ENCODE measurements at regions of chr3 and their contacts with region 1.

Region 1: DNA sequence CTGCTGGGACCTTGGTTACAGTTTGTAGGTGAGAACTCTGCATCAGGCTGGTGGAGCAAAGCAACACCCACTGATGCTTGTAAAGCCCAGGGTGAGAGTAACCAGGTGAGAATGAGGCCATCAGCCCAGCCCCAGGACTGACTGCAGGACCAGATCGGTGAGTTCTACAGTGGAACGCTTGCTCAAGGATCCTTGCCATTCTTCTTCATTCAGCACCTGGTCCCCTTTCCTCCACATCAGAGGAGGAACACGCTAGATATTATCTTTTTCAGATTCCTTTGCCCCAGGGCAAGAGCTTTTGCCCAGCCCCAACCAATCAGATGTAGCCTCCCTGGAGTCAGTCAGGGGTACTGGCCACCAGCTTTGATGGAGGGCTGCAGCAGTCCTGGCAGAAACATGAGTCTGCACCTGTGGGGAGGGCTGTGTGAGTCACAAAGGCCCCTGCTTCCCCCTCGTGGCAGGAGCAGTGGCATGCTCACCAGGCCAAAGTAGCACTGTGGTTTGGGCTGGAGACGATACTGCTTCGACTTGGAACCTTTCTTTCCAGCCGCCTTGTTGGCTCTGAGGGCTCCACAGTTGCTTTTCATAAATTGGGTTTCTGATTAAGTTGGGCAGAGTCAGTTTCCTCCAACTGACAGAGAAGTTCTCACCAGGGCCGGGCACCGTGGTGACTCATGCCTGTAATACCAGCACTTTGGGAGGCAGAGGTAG is 3.5 kb upstream of the SHISA5 start:
- DNase-seq: peak; percentile 46 to 78 (median 69)
- ATAC-seq: peak; percentile 89
- H3K4me3 ChIP-seq: no peak overlapping the region
- H3K4me3 Mint-ChIP-seq: peak overlapping the region in 9 of 10 donors; percentile 30 to 78 (median 47)
- H3K27ac ChIP-seq: no peak overlapping the region
- H3K27ac Mint-ChIP-seq: peak overlapping the region; percentile 6 to 86 (median 76)
- H3K4me1 ChIP-seq: peaks cover 27 to 41% of the 10 kb centered on the region in 2 donors
- H3K4me1 Mint-ChIP-seq: peaks cover 40 to 61% (median 57%) of the 10 kb centered on the region in 7 donors
- H3K27me3 ChIP-seq: no peaks in the 10 kb centered on the region
- H3K27me3 Mint-ChIP-seq: no peaks in the 10 kb centered on the region

Region 2: DNA sequence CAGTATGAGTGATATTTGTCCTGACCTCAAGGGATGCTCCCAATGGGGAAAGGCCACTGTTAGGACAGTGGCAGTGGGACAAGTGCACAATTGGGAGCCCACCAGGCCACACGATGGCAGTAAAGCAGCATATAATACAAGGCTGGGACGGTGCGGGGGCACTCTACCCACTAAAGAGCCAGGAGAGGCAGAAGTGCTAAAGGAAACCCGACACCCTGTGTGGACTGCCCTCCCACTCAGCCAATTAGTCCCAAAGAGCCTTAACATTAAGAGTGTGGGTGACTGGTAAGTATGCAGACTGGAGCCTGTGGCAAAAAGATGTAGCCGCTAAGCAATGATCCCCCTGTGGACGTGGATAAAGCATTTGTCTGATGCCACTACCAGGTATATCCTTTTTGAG is 274.8 kb before region 1 on chr3:
- CTCF ChIA-PET with region 1: interaction called, 4 read pairs
- POLR2A ChIA-PET with region 1: no interaction called
- intact Hi-C with region 1: loop called in 1 of 2 experiments (anchors 2 kb)
- DNase-seq: peak; percentile 21 to 54 (median 44)
- ATAC-seq: peak; percentile 92
- H3K4me3 ChIP-seq: no peak overlapping the region
- H3K4me3 Mint-ChIP-seq: no peak overlapping the region
- H3K27ac ChIP-seq: no peak overlapping the region
- H3K27ac Mint-ChIP-seq: no peak overlapping the region
- H3K4me1 ChIP-seq: no peaks in the 10 kb centered on the region
- H3K4me1 Mint-ChIP-seq: peaks cover 0 to 6% (median 3%) of the 10 kb centered on the region in 7 donors
- H3K27me3 ChIP-seq: no peaks in the 10 kb centered on the region
- H3K27me3 Mint-ChIP-seq: peaks cover 0 to 6% (median 0%) of the 10 kb centered on the region in 5 donors

Region 3: GRCh38 chr3:48273594-48274211 is 233.8 kb before region 1 on chr3:
- CTCF ChIA-PET with region 1: no interaction called
- POLR2A ChIA-PET with region 1: no interaction called
- intact Hi-C with region 1: loop called (anchors 1 to 5 kb)
- DNase-seq: peak in 8 of 9 donors; percentile 37 to 66 (median 55)
- ATAC-seq: peak; percentile 60
- H3K4me3 ChIP-seq: no peak overlapping the region
- H3K4me3 Mint-ChIP-seq: no peak overlapping the region
- H3K27ac ChIP-seq: no peak overlapping the region
- H3K27ac Mint-ChIP-seq: peak overlapping the region in 4 of 9 donors; percentile 8 to 74 (median 51)
- H3K4me1 ChIP-seq: peaks cover 4 to 14% of the 10 kb centered on the region in 2 donors
- H3K4me1 Mint-ChIP-seq: peaks cover 6 to 29% (median 21%) of the 10 kb centered on the region in 7 donors
- H3K27me3 ChIP-seq: no peaks in the 10 kb centered on the region
- H3K27me3 Mint-ChIP-seq: no peaks in the 10 kb centered on the region

Region 4: GRCh38 chr3:48446425-48447193 is 60.9 kb before region 1 on chr3 and contains the start of gene ATRIP:
- CTCF ChIA-PET with region 1: interaction called, 8 read pairs
- POLR2A ChIA-PET with region 1: interaction called, 14 read pairs
- intact Hi-C with region 1: no loop called
- DNase-seq: peak; percentile 73 to 93 (median 81)
- ATAC-seq: peak; percentile 99
- H3K4me3 ChIP-seq: peak within 1 kb of the TSS; percentile 90
- H3K4me3 Mint-ChIP-seq: peak within 1 kb of the TSS; percentile 80 to 95 (median 88)
- H3K27ac ChIP-seq: peak within 1 kb of the TSS; percentile 81
- H3K27ac Mint-ChIP-seq: peak within 1 kb of the TSS; percentile 84 to 97 (median 92)
- H3K4me1 ChIP-seq: peaks cover 20 to 22% of the 10 kb centered on the region in 2 donors
- H3K4me1 Mint-ChIP-seq: peaks cover 17 to 53% (median 45%) of the 10 kb centered on the region in 7 donors
- H3K27me3 ChIP-seq: no peaks in the 10 kb centered on the region
- H3K27me3 Mint-ChIP-seq: no peaks in the 10 kb centered on the region
- total RNA-seq, gene ATRIP: 7.9 to 14.2 (median 12.5) TPM

Region 5: DNA sequence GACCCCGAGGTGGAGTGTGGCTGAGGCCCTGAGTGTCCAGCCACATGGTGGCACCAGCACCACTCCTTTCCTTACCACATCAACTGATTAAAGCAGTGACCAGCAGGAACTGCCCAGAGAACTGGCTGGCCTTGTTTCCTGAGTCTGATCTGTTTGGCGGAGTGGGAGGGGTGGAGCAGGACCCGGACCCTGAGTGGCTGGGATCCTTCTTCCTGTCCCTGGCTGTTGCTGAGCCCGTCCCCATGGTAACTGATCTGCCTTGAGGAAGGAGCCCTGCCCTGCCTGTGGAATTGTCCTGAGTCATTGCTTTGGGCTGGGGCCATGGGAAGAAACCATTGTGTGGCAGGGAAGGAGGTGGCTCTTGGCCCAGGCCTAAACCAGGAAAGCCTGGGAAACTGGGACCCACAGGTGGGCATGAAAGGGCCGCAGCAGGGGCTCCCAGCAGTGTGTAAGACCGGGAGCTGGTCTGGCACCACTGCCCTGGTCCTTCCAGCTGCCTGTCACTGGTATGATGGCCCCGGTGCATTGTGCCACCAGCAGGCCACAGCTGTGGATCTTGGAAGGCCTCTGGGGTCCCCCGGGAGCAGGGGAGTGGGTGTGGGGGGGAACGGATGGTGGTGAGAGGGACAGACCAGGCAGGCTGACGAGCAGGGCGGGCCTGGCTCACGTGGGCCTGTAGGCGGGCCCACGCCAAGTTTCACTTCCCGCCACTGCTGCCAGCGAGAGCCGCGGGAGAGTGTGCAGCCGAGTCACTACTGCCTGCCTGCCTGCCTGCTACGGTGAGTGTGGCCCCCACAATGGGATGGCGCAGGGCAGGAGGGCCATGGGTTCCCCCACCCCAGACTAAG is 41.8 kb before region 1 on chr3:
- CTCF ChIA-PET with region 1: interaction called, 6 read pairs
- POLR2A ChIA-PET with region 1: interaction called, 12 read pairs
- intact Hi-C with region 1: loop called (anchors 1 kb)
- DNase-seq: peak; percentile 64 to 84 (median 76)
- ATAC-seq: peak; percentile 91
- H3K4me3 ChIP-seq: peak overlapping the region; percentile 87
- H3K4me3 Mint-ChIP-seq: peak overlapping the region; percentile 87 to 98 (median 91)
- H3K27ac ChIP-seq: peak overlapping the region; percentile 95
- H3K27ac Mint-ChIP-seq: peak overlapping the region; percentile 89 to 99 (median 95)
- H3K4me1 ChIP-seq: peaks cover 41 to 53% of the 10 kb centered on the region in 2 donors
- H3K4me1 Mint-ChIP-seq: peaks cover 25 to 62% (median 57%) of the 10 kb centered on the region in 7 donors
- H3K27me3 ChIP-seq: no peaks in the 10 kb centered on the region
- H3K27me3 Mint-ChIP-seq: no peaks in the 10 kb centered on the region

Region 6: DNA sequence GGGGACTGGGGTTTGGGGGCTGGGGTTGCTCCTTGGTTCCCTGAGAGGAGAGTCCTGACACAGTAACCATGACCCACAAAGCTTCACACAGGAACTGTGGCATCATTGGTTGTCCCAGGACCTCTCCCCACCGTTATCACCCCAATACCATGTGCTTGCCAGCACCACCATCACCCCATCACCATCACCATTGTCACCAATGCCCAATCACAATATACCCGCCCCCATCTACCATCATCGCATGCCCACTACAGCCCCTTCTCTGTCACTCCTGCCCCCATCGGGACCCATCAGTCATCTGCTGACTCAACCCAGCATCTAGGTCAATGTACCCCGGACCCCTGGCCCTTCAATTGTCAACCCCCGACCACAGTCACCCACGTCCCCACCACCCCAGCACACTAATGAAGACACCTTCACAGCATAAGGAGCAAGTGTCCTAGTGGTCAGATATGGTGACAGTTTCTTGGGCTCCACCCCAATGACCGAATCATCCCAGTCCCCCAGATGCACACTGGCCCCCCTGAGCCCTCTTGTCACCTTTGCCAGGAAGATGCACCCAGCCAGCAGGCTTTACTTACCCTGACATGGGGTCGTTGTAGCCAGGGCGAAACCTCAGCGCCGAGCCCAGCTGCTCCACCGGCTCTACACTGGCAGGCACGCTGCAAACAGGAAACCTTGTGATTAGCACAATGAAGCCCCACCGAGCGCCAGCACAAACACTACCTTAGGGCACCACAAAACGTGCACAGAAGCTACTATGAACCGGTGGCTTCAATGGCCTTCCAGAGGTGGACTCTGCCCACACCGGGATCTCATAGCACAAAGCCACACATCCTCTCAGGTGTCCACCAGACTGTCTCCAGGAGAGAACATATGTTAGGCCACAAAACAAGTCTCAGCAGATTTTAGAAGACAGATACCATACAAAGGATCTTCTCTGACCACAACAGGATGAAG is 28.6 kb before region 1 on chr3:
- CTCF ChIA-PET with region 1: interaction called, 18 read pairs
- POLR2A ChIA-PET with region 1: interaction called, 28 read pairs
- intact Hi-C with region 1: loop called (anchors 1 kb)
- DNase-seq: peak; percentile 34 to 88 (median 84)
- ATAC-seq: peak; percentile 88
- H3K4me3 ChIP-seq: peak overlapping the region; percentile 50
- H3K4me3 Mint-ChIP-seq: peak overlapping the region; percentile 72 to 100 (median 84)
- H3K27ac ChIP-seq: peak overlapping the region; percentile 57
- H3K27ac Mint-ChIP-seq: peak overlapping the region; percentile 86 to 99 (median 98)
- H3K4me1 ChIP-seq: peaks cover 25 to 33% of the 10 kb centered on the region in 2 donors
- H3K4me1 Mint-ChIP-seq: peaks cover 27 to 55% (median 46%) of the 10 kb centered on the region in 7 donors
- H3K27me3 ChIP-seq: no peaks in the 10 kb centered on the region
- H3K27me3 Mint-ChIP-seq: no peaks in the 10 kb centered on the region

Region 7: DNA sequence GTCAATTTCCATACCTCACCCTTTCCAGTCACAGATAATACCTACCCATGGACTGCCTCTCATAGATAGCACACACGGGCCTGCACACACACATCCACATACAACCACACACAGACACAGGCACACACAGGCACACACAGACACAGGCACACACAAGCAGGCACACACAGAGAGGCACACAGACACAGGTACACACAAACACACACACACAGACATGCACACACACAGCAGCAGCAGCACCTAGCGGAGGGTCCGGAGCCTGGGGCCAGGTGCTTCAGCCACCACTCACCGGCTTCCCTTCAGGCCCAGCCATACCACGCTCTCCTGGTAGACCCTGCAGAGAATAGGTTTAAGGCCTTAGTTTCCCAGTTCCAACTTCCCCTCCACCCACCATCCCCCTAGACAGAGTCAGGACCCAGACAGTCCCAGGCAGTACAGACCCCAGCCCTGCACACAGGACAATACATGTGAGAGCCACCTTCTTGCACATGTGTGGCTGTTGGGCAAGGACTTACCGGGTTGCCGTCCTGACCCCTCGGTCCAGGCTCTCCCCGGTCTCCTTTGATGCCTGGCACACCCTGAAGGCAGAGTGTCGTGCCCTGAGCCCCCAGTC is 66.6 kb after region 1 on chr3:
- CTCF ChIA-PET with region 1: no interaction called
- POLR2A ChIA-PET with region 1: no interaction called
- intact Hi-C with region 1: no loop called
- DNase-seq: no peak
- ATAC-seq: no peak
- H3K4me3 ChIP-seq: no peak overlapping the region
- H3K4me3 Mint-ChIP-seq: no peak overlapping the region
- H3K27ac ChIP-seq: no peak overlapping the region
- H3K27ac Mint-ChIP-seq: no peak overlapping the region
- H3K4me1 ChIP-seq: no peaks in the 10 kb centered on the region
- H3K4me1 Mint-ChIP-seq: no peaks in the 10 kb centered on the region
- H3K27me3 ChIP-seq: no peaks in the 10 kb centered on the region
- H3K27me3 Mint-ChIP-seq: no peaks in the 10 kb centered on the region

Region 8: DNA sequence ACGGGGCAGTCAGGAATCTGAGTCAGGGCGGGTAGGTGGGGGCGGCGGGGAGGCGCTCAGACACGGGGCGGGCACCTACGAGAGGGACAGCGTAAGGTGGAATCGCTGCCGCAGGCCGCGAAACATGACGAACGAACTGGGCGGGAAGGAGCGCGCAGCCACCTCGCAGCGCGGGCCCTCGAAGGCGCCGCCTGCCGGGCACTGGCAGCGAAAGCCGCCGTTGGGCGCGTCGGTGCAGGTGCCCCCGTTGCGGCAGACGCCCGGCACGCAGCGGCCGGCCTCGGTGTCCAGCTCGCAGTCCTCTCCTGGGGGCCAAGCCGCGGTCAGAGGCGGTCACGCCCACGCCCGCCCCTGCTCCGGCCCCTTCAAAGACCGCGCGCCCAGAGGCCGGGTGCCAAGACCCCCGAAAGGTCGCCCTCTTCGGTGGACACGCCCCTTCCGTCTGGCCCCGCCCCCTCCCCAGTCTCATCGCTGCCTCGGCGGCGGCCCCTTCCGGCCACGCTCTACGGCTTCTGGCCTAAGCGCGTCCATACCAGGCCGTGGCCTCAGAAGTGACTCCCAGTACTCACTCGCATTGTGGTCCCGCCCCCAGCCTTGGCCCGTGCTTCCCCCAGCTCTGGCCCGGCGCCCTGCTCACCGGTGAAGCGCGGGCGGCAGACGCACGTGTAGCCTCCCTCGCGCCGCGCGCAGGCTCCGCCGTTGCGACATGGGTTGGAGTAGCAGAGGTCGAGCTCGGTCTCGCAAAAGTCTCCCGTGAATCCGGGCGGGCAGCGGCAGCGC is 148.7 kb after region 1 on chr3:
- CTCF ChIA-PET with region 1: no interaction called
- POLR2A ChIA-PET with region 1: no interaction called
- intact Hi-C with region 1: loop called in 1 of 2 experiments (anchors 1 kb)
- DNase-seq: peak; percentile 75 to 87 (median 86)
- ATAC-seq: peak; percentile 90
- H3K4me3 ChIP-seq: peak overlapping the region; percentile 70
- H3K4me3 Mint-ChIP-seq: peak overlapping the region; percentile 67 to 86 (median 80)
- H3K27ac ChIP-seq: peak overlapping the region; percentile 65
- H3K27ac Mint-ChIP-seq: peak overlapping the region; percentile 42 to 88 (median 79)
- H3K4me1 ChIP-seq: peaks cover 12 to 14% of the 10 kb centered on the region in 2 donors
- H3K4me1 Mint-ChIP-seq: peaks cover 6 to 23% (median 9%) of the 10 kb centered on the region in 7 donors
- H3K27me3 ChIP-seq: no peaks in the 10 kb centered on the region
- H3K27me3 Mint-ChIP-seq: peaks cover 0 to 15% (median 5%) of the 10 kb centered on the region in 5 donors

Measured in naive thymus-derived CD4-positive, alpha-beta T cell (primary cell).